ENCODE measurements at regions of chr10 and their contacts with region 1.

Region 1: GRCh38 chr10:104254493-104255310 is at the start of gene GSTO1:
- DNase-seq: peak; percentile 68
- ATAC-seq: peak; percentile 87
- H3K4me3 ChIP-seq: peak within 1 kb of the TSS; percentile 87 to 95 (median 92)
- H3K4me3 Mint-ChIP-seq: peak within 1 kb of the TSS; percentile 99
- H3K27ac ChIP-seq: peak within 1 kb of the TSS; percentile 65 to 82
- H3K27ac Mint-ChIP-seq: peak within 1 kb of the TSS; percentile 97
- H3K4me1 ChIP-seq: peaks cover 13 to 14% of the 10 kb centered on the region in 2 donors
- H3K4me1 Mint-ChIP-seq: peaks cover 48% of the 10 kb centered on the region
- H3K27me3 ChIP-seq: peaks cover 0 to 4% (median 0%) of the 10 kb centered on the region in 4 experiments
- H3K27me3 Mint-ChIP-seq: peaks cover 13% of the 10 kb centered on the region
- CTCF ChIP-seq: no peak
- total RNA-seq, gene GSTO1: 36.4 and 37.7 TPM in 2 replicates

Region 2: GRCh38 chr10:104268716-104269645 is 14.3 kb after region 1 on chr10 and contains the start of gene GSTO2:
- CTCF ChIA-PET with region 1: interaction called, 39 read pairs
- POLR2A ChIA-PET with region 1: interaction called, 4 read pairs
- intact Hi-C with region 1: loop called (anchors 1 kb)
- DNase-seq: peak; percentile 99
- ATAC-seq: peak; percentile 97
- H3K4me3 ChIP-seq: peak within 1 kb of the TSS; percentile 68 to 90 (median 86)
- H3K4me3 Mint-ChIP-seq: peak within 1 kb of the TSS; percentile 88
- H3K27ac ChIP-seq: peak within 1 kb of the TSS; percentile 90 to 95
- H3K27ac Mint-ChIP-seq: peak within 1 kb of the TSS; percentile 92
- H3K4me1 ChIP-seq: peaks cover 20 to 22% of the 10 kb centered on the region in 2 donors
- H3K4me1 Mint-ChIP-seq: peaks cover 37% of the 10 kb centered on the region
- H3K27me3 ChIP-seq: peaks cover 0 to 1% (median under 1%) of the 10 kb centered on the region in 4 experiments
- H3K27me3 Mint-ChIP-seq: no peaks in the 10 kb centered on the region
- CTCF ChIP-seq: no peak
- total RNA-seq, gene GSTO2: 0.89 and 1.4 TPM in 2 replicates

Measured in B cell (primary cell).